ENCODE measurements at regions of chr5 and their contacts with region 1.

Region 1: DNA sequence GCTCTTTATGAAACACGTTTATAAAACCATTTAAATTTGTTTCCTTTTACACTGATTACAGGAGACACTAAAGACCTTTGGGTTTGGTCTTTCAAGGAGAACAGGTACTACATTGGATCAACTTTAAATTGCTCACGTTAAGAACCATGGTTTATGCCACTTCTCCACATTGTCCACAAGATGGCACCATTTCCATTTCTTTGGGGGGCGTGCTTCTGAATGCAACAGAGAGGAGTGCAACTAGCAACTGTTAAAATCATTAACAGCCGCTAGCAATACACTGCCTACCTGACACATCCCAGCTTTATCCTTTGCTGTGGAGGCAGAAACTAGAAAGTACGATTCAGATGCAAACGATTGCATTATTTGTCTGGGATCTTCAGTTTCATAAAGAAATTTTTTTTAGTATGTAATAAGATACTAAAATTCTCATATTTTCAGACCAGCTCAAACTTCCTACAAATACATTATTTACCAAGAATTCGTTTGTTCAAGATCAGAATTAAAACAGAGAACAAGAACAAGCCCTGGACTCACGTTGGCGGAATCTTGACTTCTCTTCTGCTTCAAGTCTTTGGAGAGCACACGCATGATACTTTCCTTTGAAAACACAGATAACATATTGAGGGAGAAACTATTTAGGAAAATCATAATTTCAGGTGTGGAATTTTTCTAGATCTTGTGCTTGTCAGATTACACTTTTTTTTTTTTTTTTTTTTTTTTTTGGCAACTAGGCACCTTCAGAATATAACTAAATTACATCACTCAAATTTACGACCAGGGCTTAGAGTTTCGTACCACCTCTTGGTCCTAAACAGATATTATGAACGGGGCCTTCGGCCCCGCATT is 702 bp downstream of the CDC20B start:
- DNase-seq: peak; percentile 74 to 80 (median 76)
- H3K4me3 ChIP-seq: peak overlapping the region in 1 of 2 donors; percentile 32
- H3K4me3 Mint-ChIP-seq: peak overlapping the region; percentile 84 to 91 (median 87)
- H3K27ac ChIP-seq: peak overlapping the region; percentile 34
- H3K27ac Mint-ChIP-seq: peak overlapping the region in 5 of 7 donors; percentile 41 to 94 (median 89)
- H3K4me1 ChIP-seq: peaks cover 34% of the 10 kb centered on the region
- H3K4me1 Mint-ChIP-seq: peaks cover 19 to 46% (median 28%) of the 10 kb centered on the region in 4 donors
- H3K27me3 ChIP-seq: peaks cover 35% of the 10 kb centered on the region
- H3K27me3 Mint-ChIP-seq: peaks cover 47 to 63% of the 10 kb centered on the region in 2 donors

Region 2: DNA sequence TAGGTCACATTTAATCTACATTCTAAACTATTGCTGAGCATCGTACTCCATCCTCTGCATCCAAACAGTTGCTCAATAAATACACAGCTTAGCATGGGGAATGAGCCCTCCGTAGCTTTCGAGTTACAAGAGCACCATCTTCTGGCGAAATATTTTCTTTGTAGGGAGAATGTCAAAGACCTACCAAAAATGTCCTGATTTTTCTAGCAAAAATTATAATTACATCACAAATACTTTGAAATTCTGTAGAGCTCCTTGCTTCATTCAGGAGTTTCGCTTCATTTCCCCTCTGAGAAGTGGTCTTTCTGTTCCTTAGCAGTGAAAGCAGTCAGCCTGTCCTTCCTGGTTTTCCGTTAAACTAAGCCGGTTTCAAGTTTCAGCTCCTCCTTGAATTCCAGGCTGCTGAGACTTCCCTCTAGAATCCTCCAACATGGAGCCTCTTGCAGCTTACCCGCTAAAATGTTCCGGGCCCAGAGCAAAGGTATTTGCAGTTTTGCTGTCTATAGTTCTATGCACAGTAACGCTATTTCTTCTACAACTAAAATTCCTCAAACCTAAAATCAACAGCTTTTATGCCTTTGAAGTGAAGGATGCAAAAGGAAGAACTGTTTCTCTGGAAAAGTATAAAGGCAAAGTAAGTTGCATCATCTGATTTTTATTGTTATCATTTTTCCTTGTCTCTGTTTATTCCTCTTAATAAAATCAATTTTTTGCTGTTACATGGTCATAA is 12.3 kb before region 1 on chr5 and contains the start of gene GPX8:
- CTCF ChIA-PET with region 1: interaction called, 19 read pairs
- POLR2A ChIA-PET with region 1: no interaction called
- intact Hi-C with region 1: no loop called
- DNase-seq: peak; percentile 45 to 56 (median 51)
- H3K4me3 ChIP-seq: no peak within 1 kb of the TSS
- H3K4me3 Mint-ChIP-seq: no peak within 1 kb of the TSS
- H3K27ac ChIP-seq: no peak within 1 kb of the TSS
- H3K27ac Mint-ChIP-seq: no peak within 1 kb of the TSS
- H3K4me1 ChIP-seq: no peaks in the 10 kb centered on the region
- H3K4me1 Mint-ChIP-seq: no peaks in the 10 kb centered on the region
- H3K27me3 ChIP-seq: no peaks in the 10 kb centered on the region
- H3K27me3 Mint-ChIP-seq: peaks cover 14 to 24% of the 10 kb centered on the region in 2 donors
- total RNA-seq, gene GPX8: not detected

Region 3: DNA sequence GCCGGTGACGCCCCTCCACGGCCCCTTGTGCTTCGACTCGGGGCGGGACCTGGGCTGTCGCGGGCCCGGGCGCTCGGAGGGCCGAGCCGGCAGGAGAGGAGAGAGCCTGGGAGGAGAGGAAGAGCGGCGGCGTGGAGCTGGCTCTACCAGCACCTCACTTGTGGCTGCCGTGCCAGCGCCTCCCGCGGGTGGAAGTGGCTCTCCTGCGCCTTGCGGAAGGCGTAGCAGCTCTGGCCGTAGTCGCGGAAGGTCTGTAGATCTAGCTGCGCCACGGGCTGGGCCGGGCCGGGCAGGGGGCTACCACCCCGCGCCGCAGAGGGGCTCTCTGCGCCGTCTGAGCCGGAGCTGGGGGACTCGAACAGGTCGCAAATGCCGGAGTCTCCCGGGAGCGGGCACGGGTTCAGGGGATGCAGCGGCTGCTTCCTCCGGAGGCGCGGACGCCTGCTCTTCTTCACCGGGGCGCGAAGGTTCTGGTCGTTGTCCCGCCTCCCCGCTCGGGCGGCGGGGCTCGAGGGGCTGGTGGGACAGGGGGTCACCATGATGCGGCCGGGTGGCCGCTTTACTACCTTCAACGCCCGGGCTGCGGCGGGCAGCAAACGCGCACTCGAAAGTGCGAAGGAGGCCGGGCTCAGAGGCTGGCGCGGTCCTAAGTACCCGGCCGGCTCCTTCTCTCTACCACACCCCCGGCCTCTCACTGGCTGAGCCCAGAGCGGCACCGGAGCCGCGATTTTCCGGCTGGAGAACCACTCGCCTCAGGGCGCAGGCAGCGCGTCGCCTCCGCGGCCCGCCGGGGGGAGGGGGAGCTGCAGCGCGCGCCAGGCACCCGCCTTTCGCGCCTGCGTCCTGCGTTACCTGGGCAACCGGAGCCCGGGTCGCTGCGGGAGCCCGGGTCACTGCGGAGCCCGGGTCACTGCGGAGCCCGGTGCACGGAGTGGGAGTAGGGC is 61.0 kb after region 1 on chr5 and contains the start of gene CCNO:
- CTCF ChIA-PET with region 1: interaction called, 6 read pairs
- POLR2A ChIA-PET with region 1: interaction called, 4 read pairs
- intact Hi-C with region 1: loop called (anchors 2 kb)
- DNase-seq: peak; percentile 56 to 62 (median 59)
- H3K4me3 ChIP-seq: peak within 1 kb of the TSS; percentile 46 to 65
- H3K4me3 Mint-ChIP-seq: peak within 1 kb of the TSS; percentile 80 to 94 (median 89)
- H3K27ac ChIP-seq: no peak within 1 kb of the TSS
- H3K27ac Mint-ChIP-seq: peak within 1 kb of the TSS in 3 of 7 donors; percentile 53 to 65 (median 58)
- H3K4me1 ChIP-seq: peaks cover 33% of the 10 kb centered on the region
- H3K4me1 Mint-ChIP-seq: peaks cover 18 to 38% (median 30%) of the 10 kb centered on the region in 4 donors
- H3K27me3 ChIP-seq: peaks cover 55% of the 10 kb centered on the region
- H3K27me3 Mint-ChIP-seq: peaks cover 50 to 61% of the 10 kb centered on the region in 2 donors
- total RNA-seq, gene CCNO: not detected

Region 4: DNA sequence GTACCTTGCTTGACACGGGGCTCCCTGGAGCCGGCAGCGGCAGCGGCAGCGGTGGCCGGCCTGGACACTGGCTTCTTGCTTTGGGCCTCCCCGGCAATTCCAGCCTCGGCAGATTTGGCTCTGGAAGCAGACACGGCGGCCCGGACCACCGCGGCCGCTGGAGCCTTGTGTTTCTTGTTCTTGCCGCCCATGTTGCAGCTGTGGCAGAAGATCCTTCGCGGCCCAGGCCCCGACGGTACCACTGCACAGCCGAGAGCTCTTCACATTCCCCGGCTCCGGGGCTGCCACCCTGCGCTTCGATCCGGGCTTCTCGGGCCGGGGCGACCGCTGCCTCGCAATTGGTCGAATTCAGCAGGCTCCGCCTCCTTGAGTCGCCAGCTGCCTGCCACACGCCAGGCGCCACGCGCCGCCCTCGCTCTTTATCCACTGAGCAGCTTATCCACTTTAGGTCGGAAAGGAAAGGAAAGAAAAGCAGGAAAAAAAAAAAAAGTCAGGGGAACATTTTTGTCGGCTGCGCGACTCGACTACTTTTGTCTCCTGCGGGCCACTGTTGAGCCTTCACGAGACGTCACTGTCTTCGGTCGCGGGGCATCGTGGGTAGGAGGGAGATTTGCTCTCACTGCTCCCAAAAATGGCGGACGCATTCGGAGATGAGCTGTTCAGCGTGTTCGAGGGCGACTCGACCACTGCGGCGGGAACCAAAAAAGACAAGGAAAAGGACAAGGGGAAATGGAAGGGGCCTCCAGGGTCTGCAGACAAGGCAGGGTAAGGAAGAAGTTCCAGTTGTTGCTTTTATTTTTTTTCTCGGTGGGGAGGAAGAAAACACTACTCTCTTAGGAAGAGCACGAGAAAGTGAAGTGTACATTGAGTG is 135.3 kb after region 1 on chr5 and contains the starts of genes DHX29 and MTREX:
- CTCF ChIA-PET with region 1: interaction called, 3 read pairs
- POLR2A ChIA-PET with region 1: interaction called, 5 read pairs
- intact Hi-C with region 1: loop called (anchors 10 kb)
- DNase-seq: peak; percentile 89 to 93 (median 91)
- H3K4me3 ChIP-seq: peak within 1 kb of the TSS; percentile 86 to 94
- H3K4me3 Mint-ChIP-seq: no peak within 1 kb of the TSS
- H3K27ac ChIP-seq: peak within 1 kb of the TSS; percentile 94
- H3K27ac Mint-ChIP-seq: no peak within 1 kb of the TSS
- H3K4me1 ChIP-seq: peaks cover 66% of the 10 kb centered on the region
- H3K4me1 Mint-ChIP-seq: peaks cover 21 to 35% (median 25%) of the 10 kb centered on the region in 4 donors
- H3K27me3 ChIP-seq: no peaks in the 10 kb centered on the region
- H3K27me3 Mint-ChIP-seq: no peaks in the 10 kb centered on the region
- total RNA-seq, gene DHX29: 18.5 to 22.5 TPM
- total RNA-seq, gene MTREX: 73.3 to 82.2 TPM

Region 5: GRCh38 chr5:55344392-55344992 is 172.2 kb after region 1 on chr5:
- CTCF ChIA-PET with region 1: no interaction called
- POLR2A ChIA-PET with region 1: no interaction called
- intact Hi-C with region 1: loop called (anchors 2 kb)
- DNase-seq: peak; percentile 38 to 59 (median 55)
- H3K4me3 ChIP-seq: no peak overlapping the region
- H3K4me3 Mint-ChIP-seq: no peak overlapping the region
- H3K27ac ChIP-seq: no peak overlapping the region
- H3K27ac Mint-ChIP-seq: peak overlapping the region in 4 of 7 donors; percentile 57 to 82 (median 72)
- H3K4me1 ChIP-seq: no peaks in the 10 kb centered on the region
- H3K4me1 Mint-ChIP-seq: peaks cover 0 to 6% (median 3%) of the 10 kb centered on the region in 4 donors
- H3K27me3 ChIP-seq: no peaks in the 10 kb centered on the region
- H3K27me3 Mint-ChIP-seq: no peaks in the 10 kb centered on the region

Region 6: GRCh38 chr5:55467862-55468551 is 295.7 kb after region 1 on chr5:
- CTCF ChIA-PET with region 1: no interaction called
- POLR2A ChIA-PET with region 1: no interaction called
- intact Hi-C with region 1: no loop called
- DNase-seq: no peak
- H3K4me3 ChIP-seq: no peak overlapping the region
- H3K4me3 Mint-ChIP-seq: no peak overlapping the region
- H3K27ac ChIP-seq: no peak overlapping the region
- H3K27ac Mint-ChIP-seq: no peak overlapping the region
- H3K4me1 ChIP-seq: no peaks in the 10 kb centered on the region
- H3K4me1 Mint-ChIP-seq: peaks cover 0 to 9% (median 0%) of the 10 kb centered on the region in 4 donors
- H3K27me3 ChIP-seq: no peaks in the 10 kb centered on the region
- H3K27me3 Mint-ChIP-seq: no peaks in the 10 kb centered on the region

Region 7: GRCh38 chr5:55534436-55535198 is 362.3 kb after region 1 on chr5 and contains the start of gene PLPP1:
- CTCF ChIA-PET with region 1: no interaction called
- POLR2A ChIA-PET with region 1: no interaction called
- intact Hi-C with region 1: loop called (anchors 5 kb)
- DNase-seq: peak; percentile 83 to 91 (median 86)
- H3K4me3 ChIP-seq: peak within 1 kb of the TSS; percentile 44 to 80
- H3K4me3 Mint-ChIP-seq: peak within 1 kb of the TSS; percentile 92 to 97 (median 94)
- H3K27ac ChIP-seq: peak within 1 kb of the TSS; percentile 73
- H3K27ac Mint-ChIP-seq: peak within 1 kb of the TSS; percentile 90 to 96 (median 94)
- H3K4me1 ChIP-seq: peaks cover 29% of the 10 kb centered on the region
- H3K4me1 Mint-ChIP-seq: peaks cover 21 to 26% (median 23%) of the 10 kb centered on the region in 4 donors
- H3K27me3 ChIP-seq: no peaks in the 10 kb centered on the region
- H3K27me3 Mint-ChIP-seq: no peaks in the 10 kb centered on the region
- total RNA-seq, gene PLPP1: 6.1 to 6.8 TPM

Region 8: DNA sequence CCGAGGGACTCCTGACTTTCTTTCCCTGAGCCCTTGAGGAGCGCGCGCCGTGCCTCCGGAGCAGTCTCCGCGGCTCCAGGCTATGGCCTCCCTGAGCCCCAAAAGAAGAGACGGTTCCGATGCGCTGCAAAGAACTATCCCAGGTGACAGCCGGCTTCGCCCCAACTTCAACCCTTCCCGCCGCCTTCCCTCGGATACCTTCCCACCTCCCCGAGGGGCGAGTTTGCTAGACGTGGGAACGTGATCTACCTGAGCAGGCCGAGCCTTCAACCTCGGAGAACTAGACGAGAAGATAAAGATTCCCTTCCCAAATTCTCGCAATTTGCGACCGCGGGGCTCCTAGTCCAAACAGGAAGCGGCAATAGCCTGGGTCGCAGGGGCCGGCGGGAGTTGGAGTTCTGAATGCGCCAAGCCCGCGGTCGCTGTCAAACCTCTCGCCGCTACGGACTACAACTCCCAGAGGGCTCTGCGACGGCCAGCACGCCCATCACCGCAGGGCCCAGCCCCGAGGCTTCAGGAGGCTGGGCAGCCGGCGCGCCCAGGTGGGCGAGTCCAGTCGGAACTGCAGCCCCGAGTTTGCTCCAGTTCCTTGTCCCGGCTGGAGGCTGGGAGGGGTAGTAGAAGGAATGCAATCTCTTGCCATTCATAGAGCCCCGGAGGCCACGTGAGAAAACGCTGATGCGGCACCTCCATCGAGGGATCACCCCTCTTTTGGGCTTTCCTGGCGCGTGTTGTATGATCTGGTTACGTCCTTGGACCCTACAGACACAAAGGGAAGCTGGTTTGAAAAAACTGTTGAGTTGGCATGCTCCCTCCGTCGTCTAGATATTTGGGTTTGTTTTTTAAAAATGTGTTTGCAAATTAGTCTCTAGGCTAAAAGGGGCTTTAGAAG is 539.9 kb after region 1 on chr5 and contains the start of gene SLC38A9:
- CTCF ChIA-PET with region 1: no interaction called
- POLR2A ChIA-PET with region 1: no interaction called
- intact Hi-C with region 1: loop called (anchors 5 kb)
- DNase-seq: peak; percentile 86 to 94 (median 89)
- H3K4me3 ChIP-seq: peak within 1 kb of the TSS; percentile 83 to 89
- H3K4me3 Mint-ChIP-seq: peak within 1 kb of the TSS; percentile 99 to 100 (median 99)
- H3K27ac ChIP-seq: peak within 1 kb of the TSS; percentile 78
- H3K27ac Mint-ChIP-seq: peak within 1 kb of the TSS; percentile 89 to 97 (median 96)
- H3K4me1 ChIP-seq: peaks cover 14% of the 10 kb centered on the region
- H3K4me1 Mint-ChIP-seq: peaks cover 15 to 33% (median 21%) of the 10 kb centered on the region in 4 donors
- H3K27me3 ChIP-seq: no peaks in the 10 kb centered on the region
- H3K27me3 Mint-ChIP-seq: no peaks in the 10 kb centered on the region
- total RNA-seq, gene SLC38A9: 28.0 to 28.2 TPM